ENCODE measurements at regions of chr2 and their contacts with region 1.

Region 1: GRCh38 chr2:234288974-234289455 is 207.9 kb downstream of the ARL4C start:
- DNase-seq: peak; percentile 77
- H3K4me3 ChIP-seq: no peak overlapping the region
- H3K27ac ChIP-seq: peak overlapping the region; percentile 47 to 74 (median 66)
- H3K4me1 ChIP-seq: peaks cover 12 to 60% (median 29%) of the 10 kb centered on the region in 4 donors
- H3K27me3 ChIP-seq: no peaks in the 10 kb centered on the region
- CTCF ChIP-seq: peak; percentile 72 to 80 (median 77)
- EP300 ChIP-seq: no peak
- POLR2A ChIP-seq: no peak

Region 2: GRCh38 chr2:233976690-233977294 is 312.2 kb before region 1 on chr2:
- in situ Hi-C with region 1: loop called in 1 of 4 experiments (anchors 25 kb)
- intact Hi-C with region 1: no loop called
- DNase-seq: no peak
- H3K4me3 ChIP-seq: no peak overlapping the region
- H3K27ac ChIP-seq: no peak overlapping the region
- H3K4me1 ChIP-seq: no peaks in the 10 kb centered on the region
- H3K27me3 ChIP-seq: no peaks in the 10 kb centered on the region
- CTCF ChIP-seq: peak in 4 of 5 experiments; percentile 18 to 35 (median 26)
- EP300 ChIP-seq: no peak
- POLR2A ChIP-seq: no peak